Heart left ventricle (tissue), 16 donors: ENCODE measurements at regions of chr6 and their contacts with region 1.

Region 1: GRCh38 chr6:159929819-159930218 is 39.0 kb downstream of the MAS1 start:
- DNase-seq: peak in 3 of 5 donors; percentile 29 to 38 (median 36)
- ATAC-seq: no peak
- H3K4me3 ChIP-seq: no peak overlapping the region
- H3K27ac ChIP-seq: no peak overlapping the region
- H3K4me1 ChIP-seq: peaks cover 0 to 15% (median 7%) of the 10 kb centered on the region in 12 donors
- H3K27me3 ChIP-seq: no peaks in the 10 kb centered on the region
- CTCF ChIP-seq: no peak
- POLR2A ChIP-seq: no peak

Region 2: GRCh38 chr6:159766906-159767305 is 162.9 kb before region 1 on chr6:
- intact Hi-C with region 1: no loop called
- DNase-seq: no peak
- ATAC-seq: no peak
- H3K4me3 ChIP-seq: no peak overlapping the region
- H3K27ac ChIP-seq: no peak overlapping the region
- H3K4me1 ChIP-seq: peaks cover 0 to 8% (median 5%) of the 10 kb centered on the region in 12 donors
- H3K27me3 ChIP-seq: no peaks in the 10 kb centered on the region
- CTCF ChIP-seq: no peak
- POLR2A ChIP-seq: no peak

Region 3: GRCh38 chr6:159788753-159789376 is 141.0 kb before region 1 on chr6:
- intact Hi-C with region 1: no loop called
- DNase-seq: peak; percentile 30 to 73 (median 55)
- ATAC-seq: peak in 1 of 4 donors; percentile 15
- H3K4me3 ChIP-seq: peak overlapping the region; percentile 70 to 100 (median 93)
- H3K27ac ChIP-seq: peak overlapping the region; percentile 73 to 99 (median 96)
- H3K4me1 ChIP-seq: peaks cover 5 to 50% (median 35%) of the 10 kb centered on the region in 12 donors
- H3K27me3 ChIP-seq: no peaks in the 10 kb centered on the region
- CTCF ChIP-seq: no peak
- POLR2A ChIP-seq: no peak

Region 4: DNA sequence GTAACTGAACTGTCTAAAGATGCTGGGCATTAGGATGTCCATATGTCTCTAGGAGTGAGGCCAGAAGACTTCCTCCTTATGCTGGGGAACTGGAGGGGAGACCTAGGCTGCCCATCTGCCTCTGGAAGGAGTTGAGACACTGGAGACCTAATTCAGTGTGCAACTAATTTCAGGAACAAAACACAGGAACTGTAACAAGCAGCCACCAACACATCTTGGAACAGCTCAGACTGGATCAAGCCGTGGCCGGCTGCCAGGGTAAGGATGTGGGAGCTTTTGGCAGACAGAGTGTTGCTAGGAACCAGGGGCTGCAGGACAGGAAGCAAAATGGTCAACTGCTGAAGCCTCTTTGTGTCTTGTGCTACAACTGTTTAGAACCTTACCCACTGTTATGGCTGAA is 55.4 kb before region 1 on chr6:
- intact Hi-C with region 1: loop called in 3 of 10 experiments (anchors 5 to 10 kb)
- DNase-seq: peak; percentile 51 to 80 (median 57)
- ATAC-seq: peak in 3 of 4 donors; percentile 44 to 71 (median 63)
- H3K4me3 ChIP-seq: no peak overlapping the region
- H3K27ac ChIP-seq: no peak overlapping the region
- H3K4me1 ChIP-seq: peaks cover 0 to 8% (median 0%) of the 10 kb centered on the region in 12 donors
- H3K27me3 ChIP-seq: no peaks in the 10 kb centered on the region
- CTCF ChIP-seq: no peak
- POLR2A ChIP-seq: no peak